Mammary epithelial cell (primary cell): ENCODE measurements at regions of chr22 and their contacts with region 1.

Region 1: GRCh38 chr22:42662114-42663021 is 13.2 kb upstream of the CYB5R3 start:
- DNase-seq: peak; percentile 54
- H3K4me3 ChIP-seq: peak overlapping the region; percentile 28 to 80 (median 51)
- H3K27ac ChIP-seq: no peak overlapping the region
- H3K4me1 ChIP-seq: peaks cover 4% of the 10 kb centered on the region
- H3K27me3 ChIP-seq: no peaks in the 10 kb centered on the region
- CTCF ChIP-seq: peak; percentile 50 to 84

Region 2: DNA sequence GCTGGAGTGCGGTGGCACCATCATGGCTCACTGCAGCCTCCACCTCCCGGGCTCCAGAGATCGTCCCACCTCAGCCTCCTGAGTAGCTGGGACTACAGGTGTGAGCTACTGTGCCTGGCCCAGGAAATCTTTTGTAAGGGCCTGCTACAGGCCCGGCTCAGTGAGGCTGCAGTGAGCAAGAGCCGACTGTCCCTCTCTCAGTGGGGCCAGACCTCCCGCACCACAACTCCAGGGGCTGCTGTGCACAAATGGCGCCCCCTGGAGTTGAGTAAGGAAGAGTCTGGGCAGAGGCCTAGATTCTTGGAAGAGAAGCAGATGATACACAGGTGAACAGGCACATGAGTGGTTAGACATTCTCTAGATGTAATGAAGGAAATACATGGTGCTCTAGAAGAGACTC is 101.6 kb before region 1 on chr22:
- CTCF ChIA-PET with region 1: no interaction called
- dilution Hi-C with region 1: no loop called
- in situ Hi-C with region 1: no loop called
- intact Hi-C with region 1: no loop called
- DNase-seq: no peak
- H3K4me3 ChIP-seq: no peak overlapping the region
- H3K27ac ChIP-seq: no peak overlapping the region
- H3K4me1 ChIP-seq: peaks cover 5% of the 10 kb centered on the region
- H3K27me3 ChIP-seq: no peaks in the 10 kb centered on the region
- CTCF ChIP-seq: peak; percentile 22 to 42

Region 3: GRCh38 chr22:42614312-42615091 is 47.9 kb before region 1 on chr22 and contains the start of gene POLDIP3:
- CTCF ChIA-PET with region 1: no interaction called
- dilution Hi-C with region 1: no loop called
- in situ Hi-C with region 1: no loop called
- intact Hi-C with region 1: no loop called
- DNase-seq: peak; percentile 95
- H3K4me3 ChIP-seq: peak within 1 kb of the TSS; percentile 55 to 85 (median 72)
- H3K27ac ChIP-seq: peak within 1 kb of the TSS; percentile 99
- H3K4me1 ChIP-seq: peaks cover 25% of the 10 kb centered on the region
- H3K27me3 ChIP-seq: no peaks in the 10 kb centered on the region
- CTCF ChIP-seq: peak in 1 of 2 donors; percentile 33
- total RNA-seq, gene POLDIP3: 21.5 to 53.6 TPM

Region 4: GRCh38 chr22:42697542-42698013 is 35.2 kb after region 1 on chr22:
- CTCF ChIA-PET with region 1: no interaction called
- dilution Hi-C with region 1: no loop called
- in situ Hi-C with region 1: no loop called
- intact Hi-C with region 1: no loop called
- DNase-seq: peak; percentile 74
- H3K4me3 ChIP-seq: no peak overlapping the region
- H3K27ac ChIP-seq: no peak overlapping the region
- H3K4me1 ChIP-seq: peaks cover 6% of the 10 kb centered on the region
- H3K27me3 ChIP-seq: no peaks in the 10 kb centered on the region
- CTCF ChIP-seq: no peak

Region 5: DNA sequence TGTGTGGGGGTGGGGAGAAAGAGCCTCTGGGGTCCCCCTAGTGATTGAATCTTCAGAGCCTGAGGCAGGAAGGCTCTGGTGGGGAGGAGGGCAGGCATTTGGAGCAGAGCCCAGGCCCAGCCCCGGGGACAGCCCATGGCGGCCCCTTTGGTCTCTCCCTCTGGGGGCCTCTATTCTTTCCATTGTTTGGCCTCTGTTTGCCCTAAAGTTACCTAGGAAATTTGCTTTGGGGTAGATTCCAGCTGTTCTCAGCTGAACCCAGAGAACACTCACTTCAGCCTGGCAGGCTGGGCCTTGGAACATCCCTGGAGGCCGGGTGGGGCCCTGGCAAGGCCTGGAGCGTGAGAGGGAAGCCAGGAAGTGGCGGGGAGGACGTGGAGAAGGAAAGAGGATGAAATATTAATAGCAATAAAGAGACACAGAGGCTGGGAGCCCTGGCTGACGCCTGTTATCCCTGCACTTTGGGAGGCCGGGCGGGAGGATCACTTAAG is 81.2 kb after region 1 on chr22:
- CTCF ChIA-PET with region 1: no interaction called
- dilution Hi-C with region 1: loop called (anchors 5 kb)
- in situ Hi-C with region 1: no loop called
- intact Hi-C with region 1: no loop called
- DNase-seq: no peak
- H3K4me3 ChIP-seq: no peak overlapping the region
- H3K27ac ChIP-seq: no peak overlapping the region
- H3K4me1 ChIP-seq: peaks cover 18% of the 10 kb centered on the region
- H3K27me3 ChIP-seq: no peaks in the 10 kb centered on the region
- CTCF ChIP-seq: no peak

Region 6: DNA sequence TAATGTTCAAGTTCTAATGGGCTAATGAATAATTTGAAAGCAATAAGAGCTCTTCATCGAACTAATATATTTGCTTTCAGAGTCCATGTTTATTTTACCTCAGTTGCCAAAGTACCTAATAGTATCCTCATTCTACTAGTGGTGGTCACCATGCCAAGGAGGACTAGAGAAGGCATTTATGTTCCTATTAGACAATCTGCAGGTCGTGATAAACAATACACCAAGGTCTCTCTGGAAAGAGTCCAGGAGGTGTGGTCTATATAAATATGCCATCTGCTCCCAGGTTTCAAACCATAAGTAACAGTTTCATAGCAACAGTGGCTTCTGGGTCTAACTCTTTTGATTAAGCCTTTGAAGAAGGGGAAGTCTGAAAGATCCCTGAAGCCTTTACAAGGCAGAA is 151.8 kb after region 1 on chr22:
- CTCF ChIA-PET with region 1: no interaction called
- dilution Hi-C with region 1: no loop called
- in situ Hi-C with region 1: loop called in 1 of 2 experiments (anchors 10 kb)
- intact Hi-C with region 1: no loop called
- DNase-seq: no peak
- H3K4me3 ChIP-seq: no peak overlapping the region
- H3K27ac ChIP-seq: no peak overlapping the region
- H3K4me1 ChIP-seq: peaks cover 7% of the 10 kb centered on the region
- H3K27me3 ChIP-seq: no peaks in the 10 kb centered on the region
- CTCF ChIP-seq: no peak

Region 7: DNA sequence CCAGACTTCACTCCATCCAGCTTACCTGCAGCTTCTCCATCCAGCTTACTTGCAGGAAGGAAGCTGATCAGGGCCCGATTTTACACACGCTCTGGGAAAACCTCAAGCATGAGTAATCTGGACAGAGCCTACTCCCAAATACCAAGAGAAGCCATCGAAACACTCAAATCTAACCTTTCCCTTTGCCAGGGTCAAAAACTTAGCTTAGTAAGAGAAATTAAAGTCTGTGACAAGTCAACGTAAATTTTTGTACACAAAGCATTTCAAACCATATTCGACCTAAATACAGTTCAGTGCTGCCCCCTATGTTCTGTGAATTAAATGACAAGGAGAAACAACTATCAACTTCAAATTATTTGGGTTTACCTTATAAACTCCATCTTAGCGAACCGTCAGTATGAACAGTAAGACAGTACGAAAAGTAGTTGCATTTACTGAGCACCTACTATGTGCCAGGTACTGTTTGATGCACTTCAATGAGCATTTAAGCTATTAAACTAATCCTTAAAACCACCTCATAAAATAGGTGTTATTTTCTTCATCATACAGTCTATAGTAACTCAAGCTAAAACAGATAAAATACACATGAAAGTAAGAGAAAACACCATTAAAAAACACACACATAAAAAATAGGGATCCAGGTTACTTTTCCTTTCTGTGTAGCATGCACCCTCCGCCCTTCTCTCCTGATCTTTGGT is 157.8 kb after region 1 on chr22:
- CTCF ChIA-PET with region 1: no interaction called
- dilution Hi-C with region 1: no loop called
- in situ Hi-C with region 1: loop called in 1 of 2 experiments (anchors 10 kb)
- intact Hi-C with region 1: loop called (anchors 1 kb)
- DNase-seq: peak; percentile 82
- H3K4me3 ChIP-seq: no peak overlapping the region
- H3K27ac ChIP-seq: no peak overlapping the region
- H3K4me1 ChIP-seq: peaks cover 10% of the 10 kb centered on the region
- H3K27me3 ChIP-seq: no peaks in the 10 kb centered on the region
- CTCF ChIP-seq: peak; percentile 61 to 76

Region 8: DNA sequence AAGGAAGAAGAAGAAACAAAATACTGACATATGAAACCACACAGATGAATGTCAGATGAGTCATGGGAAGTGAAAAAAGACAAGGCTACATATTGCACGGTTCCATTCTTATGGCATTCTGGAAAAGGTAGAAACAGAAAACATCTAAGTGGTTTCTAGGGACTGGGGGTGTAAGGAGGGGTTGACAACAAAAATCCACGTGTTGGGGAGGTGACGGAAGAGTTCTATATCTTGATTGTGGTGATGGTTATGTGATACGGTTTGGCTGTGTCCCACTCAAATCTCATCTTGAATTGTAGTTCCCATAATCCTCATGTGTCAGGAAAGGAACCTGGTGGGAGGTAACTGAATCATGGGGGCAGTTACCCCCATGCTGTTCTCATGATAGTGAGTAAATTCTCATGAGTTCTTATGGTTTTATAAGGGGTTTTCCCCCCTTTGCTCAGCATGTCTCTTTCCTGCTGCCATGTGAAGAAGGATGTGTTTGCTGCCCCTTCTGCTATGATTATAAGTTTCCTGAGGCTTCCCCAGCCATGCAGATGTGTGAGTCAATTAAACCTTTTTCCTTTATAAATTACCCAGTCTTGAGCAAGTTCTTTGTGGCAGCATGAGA is 201.1 kb after region 1 on chr22:
- CTCF ChIA-PET with region 1: no interaction called
- dilution Hi-C with region 1: no loop called
- in situ Hi-C with region 1: no loop called
- intact Hi-C with region 1: loop called (anchors 1 kb)
- DNase-seq: peak; percentile 85
- H3K4me3 ChIP-seq: no peak overlapping the region
- H3K27ac ChIP-seq: peak overlapping the region; percentile 57
- H3K4me1 ChIP-seq: peaks cover 13% of the 10 kb centered on the region
- H3K27me3 ChIP-seq: no peaks in the 10 kb centered on the region
- CTCF ChIP-seq: no peak